Activated CD8-positive, alpha-beta T cell treated with anti-CD3 and anti-CD28 coated beads, Interleukin-2, amount 10 ng/mL, durations not matched to agents 7 days and 5 days (primary cell): ENCODE measurements at regions of chr12 and their contacts with region 1.

Region 1: DNA sequence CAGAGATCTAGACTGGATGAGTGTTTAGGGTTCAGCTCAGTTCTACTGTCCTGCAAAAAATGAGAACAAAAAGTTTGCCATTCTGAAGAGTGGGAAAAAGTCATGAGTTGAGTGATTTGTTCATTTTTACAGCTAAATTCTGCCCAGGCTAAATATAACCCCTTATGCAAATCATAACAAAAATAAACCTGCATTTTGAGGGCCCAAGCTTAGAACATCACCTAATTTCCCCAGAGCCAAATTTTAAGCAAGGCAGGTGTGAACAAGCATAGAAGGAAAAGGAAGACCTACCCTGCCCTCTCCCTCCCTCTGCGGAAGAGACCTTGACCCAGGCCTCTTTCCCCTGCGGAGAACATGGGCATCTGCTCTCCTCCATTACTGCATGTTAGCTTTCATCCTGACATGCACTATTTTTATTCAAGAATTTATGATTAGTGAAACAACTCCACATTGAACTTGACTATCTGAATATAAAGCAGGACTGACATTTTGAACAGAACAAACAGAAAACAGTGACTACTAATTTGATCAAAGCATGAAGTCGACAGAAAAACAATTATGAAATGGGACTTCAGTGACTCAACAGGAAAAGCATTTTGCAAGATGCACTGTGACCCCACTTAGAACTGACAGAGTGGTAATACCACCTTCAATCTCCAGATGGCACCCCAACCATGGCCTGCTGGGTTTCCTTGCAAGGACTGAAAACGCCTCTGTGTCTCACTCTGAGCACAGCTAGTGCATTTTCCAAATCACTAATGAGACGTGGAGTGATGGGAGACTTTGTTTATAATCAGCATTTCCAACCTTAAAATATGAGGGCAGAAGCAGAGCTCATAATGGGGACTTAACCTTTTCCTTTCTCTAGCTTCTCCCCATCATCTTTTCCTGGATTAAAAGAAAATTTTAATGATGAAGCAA is 30.9 kb upstream of the SELPLG start:
- DNase-seq: peak; percentile 90
- ATAC-seq: peak; percentile 98
- H3K4me3 Mint-ChIP-seq: no peak overlapping the region
- H3K27ac Mint-ChIP-seq: peak overlapping the region; percentile 76
- H3K4me1 Mint-ChIP-seq: peaks cover 20% of the 10 kb centered on the region
- H3K27me3 Mint-ChIP-seq: no peaks in the 10 kb centered on the region

Region 2: DNA sequence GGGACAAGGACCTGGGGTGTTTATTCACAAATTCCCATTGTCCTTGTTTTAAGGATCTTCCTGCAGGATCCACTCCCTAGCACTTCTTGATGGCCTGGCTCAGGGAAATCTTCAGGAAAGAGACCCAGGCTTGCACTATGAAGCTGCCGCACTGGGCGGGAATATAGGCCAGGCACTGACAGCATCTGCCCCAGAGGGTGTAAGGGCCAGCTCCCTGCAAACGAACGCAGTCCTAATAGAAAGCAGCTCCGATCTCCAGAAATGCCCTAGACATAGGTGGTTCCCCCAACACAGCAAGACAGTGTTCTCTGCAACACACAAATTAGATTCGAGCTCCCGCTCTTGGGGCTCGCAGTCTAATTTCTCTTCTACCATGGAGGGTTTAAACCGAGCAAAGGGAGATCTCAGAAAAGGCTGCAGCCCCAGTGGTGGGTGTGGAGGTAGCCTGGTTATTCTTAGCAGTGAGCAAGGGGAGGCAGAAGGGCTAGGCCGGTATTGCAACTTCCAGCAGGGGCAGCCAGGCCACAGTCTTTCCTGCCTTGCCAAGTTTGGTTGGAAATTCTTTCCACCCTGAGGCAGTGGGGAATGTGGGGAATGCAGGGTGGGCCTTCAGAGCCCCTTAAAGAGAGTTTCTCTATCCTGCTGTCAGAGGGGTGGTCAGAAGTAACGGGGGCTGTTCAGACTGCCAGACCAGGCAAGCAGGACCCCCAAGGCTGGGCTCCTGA is 551.6 kb before region 1 on chr12:
- CTCF ChIA-PET with region 1: no interaction called
- POLR2A ChIA-PET with region 1: no interaction called
- DNase-seq: no peak
- ATAC-seq: no peak
- H3K4me3 Mint-ChIP-seq: no peak overlapping the region
- H3K27ac Mint-ChIP-seq: no peak overlapping the region
- H3K4me1 Mint-ChIP-seq: no peaks in the 10 kb centered on the region
- H3K27me3 Mint-ChIP-seq: peaks cover 10% of the 10 kb centered on the region

Region 3: GRCh38 chr12:108633534-108634248 is 30.9 kb before region 1 on chr12 and contains the start of gene SELPLG:
- CTCF ChIA-PET with region 1: interaction called, 30 read pairs
- POLR2A ChIA-PET with region 1: interaction called, 6 read pairs
- DNase-seq: peak; percentile 92
- ATAC-seq: peak; percentile 59
- H3K4me3 Mint-ChIP-seq: peak within 1 kb of the TSS; percentile 100
- H3K27ac Mint-ChIP-seq: peak within 1 kb of the TSS; percentile 99
- H3K4me1 Mint-ChIP-seq: peaks cover 63% of the 10 kb centered on the region
- H3K27me3 Mint-ChIP-seq: no peaks in the 10 kb centered on the region
- total RNA-seq, gene SELPLG: 144 to 150 TPM

Region 4: DNA sequence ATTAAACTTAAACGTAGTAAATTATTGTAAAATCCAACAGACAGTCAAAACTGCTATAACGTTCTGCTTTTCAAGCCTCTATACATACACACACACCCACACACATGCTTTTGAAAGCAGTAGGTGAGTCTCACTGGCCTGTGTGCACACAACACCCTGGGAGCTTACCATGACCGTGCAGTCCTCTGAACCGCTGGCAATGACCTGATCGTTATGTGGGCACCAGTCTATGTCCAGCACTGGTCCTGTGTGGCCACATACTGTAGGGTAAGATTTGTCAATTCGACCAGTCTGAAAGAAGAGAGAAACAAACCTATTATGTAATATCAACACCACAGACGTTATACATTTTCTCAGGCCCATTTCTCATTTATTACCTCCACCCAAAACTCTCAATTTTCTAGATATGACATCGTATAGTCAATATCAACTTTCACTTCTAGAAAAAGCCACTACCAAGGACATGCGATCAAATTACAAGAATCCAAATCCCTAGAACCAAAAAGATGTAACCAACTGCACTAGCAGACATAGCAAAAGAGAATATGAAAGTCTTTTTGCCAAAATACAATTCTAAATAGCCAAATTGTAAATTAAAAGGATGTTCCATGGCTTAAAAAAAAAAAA is 13.6 kb after region 1 on chr12:
- CTCF ChIA-PET with region 1: interaction called, 18 read pairs
- POLR2A ChIA-PET with region 1: no interaction called
- DNase-seq: no peak
- ATAC-seq: no peak
- H3K4me3 Mint-ChIP-seq: no peak overlapping the region
- H3K27ac Mint-ChIP-seq: no peak overlapping the region
- H3K4me1 Mint-ChIP-seq: peaks cover 12% of the 10 kb centered on the region
- H3K27me3 Mint-ChIP-seq: no peaks in the 10 kb centered on the region

Region 5: DNA sequence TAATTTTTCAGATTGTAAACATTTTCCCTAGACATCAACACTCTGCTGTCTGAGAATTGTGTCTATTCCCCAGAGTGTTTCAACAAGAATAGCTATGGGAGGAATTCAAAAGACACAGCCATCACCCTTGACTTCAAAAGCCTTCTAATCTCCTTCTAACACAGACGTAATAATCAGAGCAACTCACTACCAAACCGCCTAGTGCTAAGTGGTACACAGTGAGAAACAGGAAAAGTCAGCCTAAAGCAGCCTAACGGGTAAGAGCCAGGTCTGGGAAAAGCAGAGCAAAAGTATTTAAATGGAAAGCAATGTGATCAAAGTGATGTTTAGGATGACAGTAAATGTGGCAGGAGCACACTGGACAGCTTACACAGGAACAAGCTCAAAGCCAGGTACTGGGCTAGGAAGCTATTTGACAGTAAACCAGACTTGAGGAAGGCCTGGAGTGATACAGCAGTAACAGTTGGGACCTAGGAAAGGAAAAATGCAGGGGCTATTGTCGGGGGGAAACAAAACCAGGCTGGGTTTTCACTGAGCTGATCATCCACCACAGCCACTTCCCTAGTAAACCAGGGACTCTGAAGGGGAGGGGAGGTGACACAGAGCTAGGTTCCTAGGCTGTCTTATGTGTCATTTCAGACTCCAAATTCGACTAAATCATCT is 37.3 kb after region 1 on chr12:
- CTCF ChIA-PET with region 1: interaction called, 16 read pairs
- POLR2A ChIA-PET with region 1: no interaction called
- DNase-seq: peak; percentile 37
- ATAC-seq: peak; percentile 79
- H3K4me3 Mint-ChIP-seq: no peak overlapping the region
- H3K27ac Mint-ChIP-seq: no peak overlapping the region
- H3K4me1 Mint-ChIP-seq: peaks cover 22% of the 10 kb centered on the region
- H3K27me3 Mint-ChIP-seq: no peaks in the 10 kb centered on the region

Region 6: GRCh38 chr12:108803428-108804105 is 139.0 kb after region 1 on chr12:
- CTCF ChIA-PET with region 1: interaction called, 281 read pairs
- POLR2A ChIA-PET with region 1: interaction called, 3 read pairs
- DNase-seq: peak; percentile 81
- ATAC-seq: peak; percentile 90
- H3K4me3 Mint-ChIP-seq: no peak overlapping the region
- H3K27ac Mint-ChIP-seq: no peak overlapping the region
- H3K4me1 Mint-ChIP-seq: peaks cover 13% of the 10 kb centered on the region
- H3K27me3 Mint-ChIP-seq: no peaks in the 10 kb centered on the region